ENCODE measurements at regions of chr2 and their contacts with region 1.

Region 1: GRCh38 chr2:130355578-130356431 is at the start of gene PTPN18:
- DNase-seq: no peak
- H3K4me3 ChIP-seq: peak within 1 kb of the TSS; percentile 67
- CTCF ChIP-seq: peak; percentile 62

Region 2: DNA sequence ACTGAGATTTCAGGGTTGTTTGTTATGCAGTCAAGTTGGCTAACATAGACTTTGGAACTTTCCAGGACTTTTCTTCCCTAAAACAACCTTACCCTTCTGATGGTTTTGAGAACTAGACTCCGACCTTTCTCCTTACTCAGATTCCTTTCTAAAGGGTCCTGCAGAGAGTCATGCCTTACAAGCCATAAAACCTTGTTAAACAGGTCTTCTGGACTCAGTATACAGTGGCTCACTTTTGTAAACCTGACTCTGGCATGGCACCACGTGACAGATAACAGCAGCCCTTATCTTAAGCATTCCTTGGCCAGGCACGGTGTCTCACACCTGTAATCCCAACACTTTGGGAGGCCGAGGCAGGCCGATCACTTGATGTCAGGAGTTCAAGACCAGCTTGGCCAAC is 629.6 kb before region 1 on chr2:
- CTCF ChIA-PET with region 1: no interaction called
- POLR2A ChIA-PET with region 1: no interaction called
- DNase-seq: no peak
- H3K4me3 ChIP-seq: no peak overlapping the region
- CTCF ChIP-seq: no peak

Region 3: DNA sequence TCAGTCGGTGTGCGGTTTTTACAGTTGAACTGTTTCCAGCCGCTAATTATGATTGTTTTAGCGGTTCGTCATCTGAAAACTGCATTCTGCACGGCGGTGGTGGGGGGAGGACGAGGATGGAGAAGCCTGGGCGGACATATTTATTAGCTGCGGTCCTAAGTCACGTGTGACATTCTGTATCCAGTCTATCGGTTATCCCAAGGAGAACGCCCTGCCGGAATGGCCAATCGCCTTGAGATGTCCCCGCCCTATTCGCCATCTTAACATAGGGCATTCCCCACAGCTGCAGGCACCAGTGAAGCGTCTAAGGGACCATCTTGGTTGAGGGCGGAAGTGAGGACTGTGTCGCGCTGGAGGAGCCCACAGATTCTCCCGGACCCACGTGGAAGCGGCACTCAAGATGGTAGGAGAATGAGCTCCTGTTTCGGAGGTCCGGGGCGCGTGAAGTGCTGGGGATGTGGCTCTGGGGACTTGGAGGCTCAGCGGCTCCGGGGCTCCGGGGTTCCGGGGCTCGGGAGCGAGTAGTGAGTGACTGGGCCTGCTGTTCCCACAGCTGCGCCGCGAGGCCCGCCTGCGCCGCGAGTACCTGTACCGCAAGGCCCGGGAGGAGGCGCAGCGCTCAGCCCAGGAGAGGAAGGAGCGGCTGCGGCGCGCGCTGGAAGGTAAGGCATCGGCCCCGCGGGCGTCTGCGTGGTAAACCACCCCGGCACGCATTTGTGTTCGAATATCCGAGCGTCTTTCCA is 13.1 kb before region 1 on chr2 and contains the start of gene IMP4:
- CTCF ChIA-PET with region 1: interaction called, 39 read pairs
- POLR2A ChIA-PET with region 1: interaction called, 17 read pairs
- DNase-seq: peak; percentile 97
- H3K4me3 ChIP-seq: peak within 1 kb of the TSS; percentile 93
- CTCF ChIP-seq: peak; percentile 46

Region 4: GRCh38 chr2:130785466-130786055 is 429.8 kb after region 1 on chr2:
- CTCF ChIA-PET with region 1: no interaction called
- POLR2A ChIA-PET with region 1: no interaction called
- DNase-seq: no peak
- H3K4me3 ChIP-seq: no peak overlapping the region
- CTCF ChIP-seq: no peak

Region 5: GRCh38 chr2:131004446-131005209 is 648.8 kb after region 1 on chr2:
- CTCF ChIA-PET with region 1: no interaction called
- POLR2A ChIA-PET with region 1: no interaction called
- DNase-seq: no peak
- H3K4me3 ChIP-seq: no peak overlapping the region
- CTCF ChIP-seq: no peak